ENCODE measurements at regions of chr10 and their contacts with region 1.

Region 1: DNA sequence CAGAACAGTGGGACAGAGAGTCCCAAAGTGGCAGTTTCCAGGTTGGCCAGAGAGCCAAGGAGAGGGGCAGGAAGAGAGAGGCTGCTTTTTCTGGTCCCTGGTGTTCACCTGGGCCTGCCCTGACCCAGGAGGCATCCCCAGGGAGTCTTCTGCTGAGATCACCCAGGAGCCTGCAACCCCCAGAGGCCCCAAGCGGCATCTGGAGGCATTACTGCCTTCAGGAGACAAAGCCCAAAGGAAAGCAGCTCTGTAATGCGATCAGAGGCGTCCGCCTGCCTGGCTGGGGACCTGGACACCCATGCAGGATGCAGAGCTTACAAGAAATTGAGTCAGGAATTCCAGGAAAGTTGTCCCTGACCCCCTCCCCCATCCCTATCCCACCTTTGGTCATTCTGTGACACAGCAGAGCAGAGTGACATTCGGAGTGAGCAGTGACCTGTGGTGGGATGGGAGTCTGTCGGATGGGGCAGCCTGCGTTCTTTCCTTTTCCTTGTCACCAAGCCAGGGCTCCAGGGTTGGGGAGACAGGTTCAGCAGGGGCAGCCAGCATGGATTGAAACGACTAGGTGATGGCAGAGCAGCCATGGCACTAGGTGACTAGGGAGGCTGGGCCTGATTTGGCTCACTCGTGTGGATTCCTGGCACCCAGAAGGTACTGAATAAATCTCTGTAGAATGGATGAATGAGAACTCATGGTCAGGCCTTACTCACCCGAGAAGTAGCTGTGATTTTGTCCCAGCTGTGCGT is 10.4 kb downstream of the UNC5B start:
- DNase-seq: peak; percentile 46
- ATAC-seq: peak; percentile 62
- H3K4me3 Mint-ChIP-seq: no peak overlapping the region
- H3K27ac Mint-ChIP-seq: peak overlapping the region; percentile 95
- H3K4me1 Mint-ChIP-seq: peaks cover 53% of the 10 kb centered on the region
- H3K27me3 Mint-ChIP-seq: 0 out of 2 replicates have a peak, but pooled peaks cover 3% of the 10 kb centered on the region
- CTCF ChIP-seq: 0 out of 2 replicates have a peak, but pooled peaks have one; percentile 16

Region 2: DNA sequence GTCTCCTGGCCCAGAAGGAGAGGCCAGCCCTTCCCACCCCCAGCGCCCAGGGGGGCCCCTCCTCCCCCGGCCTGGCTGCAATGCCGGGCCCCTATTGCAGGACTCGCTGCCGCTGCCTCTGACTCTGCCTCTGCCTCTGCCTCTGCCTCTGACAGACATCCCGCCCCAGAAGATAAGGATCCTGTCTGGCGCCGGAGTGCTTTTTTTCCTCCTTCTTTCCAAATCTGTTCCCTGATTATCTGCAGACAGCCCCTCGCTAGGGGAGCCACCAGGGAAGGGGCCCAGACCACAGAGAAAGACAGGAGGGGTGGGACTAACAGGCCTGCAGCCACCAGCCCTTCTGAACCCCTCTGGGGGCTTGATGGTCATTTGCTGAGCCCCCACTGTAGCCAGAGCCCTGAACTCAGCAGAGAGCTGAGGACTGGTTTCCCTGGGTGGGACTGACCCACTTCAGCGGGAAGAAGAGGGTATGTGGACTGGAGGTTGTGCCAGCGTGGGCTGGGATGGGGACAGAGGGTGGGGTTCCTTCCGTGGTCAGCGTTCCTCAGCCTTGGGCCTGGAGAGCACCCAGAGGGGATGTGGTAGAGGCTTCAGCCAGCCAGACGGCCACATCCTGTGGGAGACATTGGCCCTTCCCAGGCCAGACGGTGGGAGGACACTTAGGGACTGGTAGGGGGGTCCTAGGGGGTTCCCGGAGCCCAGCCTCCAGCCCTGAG is 12.4 kb after region 1 on chr10:
- CTCF ChIA-PET with region 1: interaction called, 13 read pairs
- POLR2A ChIA-PET with region 1: interaction called, 3 read pairs
- DNase-seq: no peak
- ATAC-seq: no peak
- H3K4me3 Mint-ChIP-seq: no peak overlapping the region
- H3K27ac Mint-ChIP-seq: no peak overlapping the region
- H3K4me1 Mint-ChIP-seq: peaks cover 70% of the 10 kb centered on the region
- H3K27me3 Mint-ChIP-seq: no peaks in the 10 kb centered on the region
- CTCF ChIP-seq: no peak

Region 3: GRCh38 chr10:71263376-71263775 is 40.6 kb after region 1 on chr10:
- CTCF ChIA-PET with region 1: interaction called, 67 read pairs
- POLR2A ChIA-PET with region 1: interaction called, 3 read pairs
- DNase-seq: peak; percentile 23
- ATAC-seq: no peak; the same call in 1 of the 2 replicates
- H3K4me3 Mint-ChIP-seq: peak overlapping the region; percentile 16; the same call in 1 of the 2 replicates
- H3K27ac Mint-ChIP-seq: peak overlapping the region; percentile 45; the same call in 1 of the 2 replicates
- H3K4me1 Mint-ChIP-seq: peaks cover 67% of the 10 kb centered on the region
- H3K27me3 Mint-ChIP-seq: no peaks in the 10 kb centered on the region
- CTCF ChIP-seq: no peak

Region 4: DNA sequence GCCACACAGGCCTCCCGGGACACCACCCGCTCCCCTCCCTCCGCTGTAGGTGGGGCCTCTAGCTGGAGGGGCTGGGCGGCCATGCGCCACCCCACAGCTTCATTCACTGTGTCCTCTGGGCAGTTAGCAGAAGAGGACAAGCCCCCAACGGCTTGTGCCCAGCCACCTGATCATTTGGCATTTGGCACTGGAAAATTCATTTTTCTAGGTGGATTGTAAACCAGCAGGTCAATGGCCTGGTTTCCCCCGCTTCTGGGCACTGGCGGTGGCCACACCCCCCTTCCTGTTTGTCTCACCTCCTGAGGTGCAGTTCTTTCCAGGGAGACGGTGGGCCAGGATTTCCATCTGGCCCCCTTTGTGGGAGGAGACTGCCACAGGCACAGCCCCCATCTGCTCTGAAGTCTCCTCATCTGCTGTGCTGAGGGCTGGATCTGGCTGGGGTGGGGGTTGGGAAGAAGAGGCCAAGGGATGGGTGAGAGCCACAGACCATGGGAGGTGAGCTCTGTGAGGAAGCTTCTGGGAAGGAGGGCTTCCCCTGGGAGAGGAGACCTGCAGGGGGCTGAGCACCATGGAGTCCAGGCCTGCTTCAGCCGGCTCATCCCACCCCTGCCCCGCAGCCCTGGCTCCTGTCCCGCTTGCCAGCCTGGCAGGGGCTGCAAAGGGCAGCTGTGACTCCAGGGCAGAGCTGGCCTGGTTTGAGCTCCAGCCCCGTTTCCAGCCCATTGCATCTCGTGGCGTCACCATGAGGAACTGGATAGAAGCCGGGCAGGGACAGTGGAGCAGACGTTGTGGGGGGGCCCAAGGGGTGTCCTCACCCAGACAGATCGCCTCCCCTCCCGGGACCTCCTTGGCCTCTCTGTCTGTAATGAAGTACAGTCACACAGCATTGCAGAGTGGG is 56.2 kb after region 1 on chr10:
- CTCF ChIA-PET with region 1: interaction called, 11 read pairs
- POLR2A ChIA-PET with region 1: no interaction called
- DNase-seq: peak; percentile 47
- ATAC-seq: peak; percentile 78
- H3K4me3 Mint-ChIP-seq: no peak overlapping the region
- H3K27ac Mint-ChIP-seq: no peak overlapping the region
- H3K4me1 Mint-ChIP-seq: peaks cover 44% of the 10 kb centered on the region
- H3K27me3 Mint-ChIP-seq: no peaks in the 10 kb centered on the region
- CTCF ChIP-seq: no peak